ENCODE measurements at regions of chr9 and their contacts with region 1.

Region 1: DNA sequence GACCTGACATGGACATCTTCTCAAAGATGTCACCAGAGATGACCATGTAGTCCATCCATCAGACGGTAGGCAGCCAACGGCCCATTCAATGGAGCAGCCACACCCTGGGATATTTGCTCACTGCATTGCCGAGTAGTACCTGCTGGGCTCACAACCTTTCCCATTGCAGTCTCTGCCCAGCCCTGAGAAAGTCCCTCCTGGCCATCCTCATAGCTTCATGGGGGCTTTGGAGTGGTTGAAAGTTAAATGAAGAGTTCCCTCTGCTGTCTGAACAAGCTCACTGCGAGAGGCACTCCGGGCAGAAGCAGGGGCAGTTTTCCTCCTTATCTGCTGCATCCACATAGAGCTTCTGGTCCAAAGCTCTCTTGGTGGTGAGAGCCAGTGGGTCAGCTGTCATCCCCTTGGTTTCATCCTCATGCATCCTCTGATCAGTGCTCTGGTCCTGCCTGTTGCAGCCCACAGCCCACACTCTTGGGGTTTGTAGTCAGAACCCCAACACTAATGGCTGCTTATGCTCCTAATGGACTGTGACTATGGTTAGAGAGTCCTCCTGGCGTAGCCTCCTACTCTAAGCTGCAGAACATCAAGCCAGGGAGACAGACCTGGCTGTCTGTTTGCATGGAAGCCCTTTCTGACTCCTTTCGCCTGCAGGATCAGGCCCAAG is 23.4 kb downstream of the TNFSF8 start:
- DNase-seq: no peak
- H3K4me3 ChIP-seq: no peak overlapping the region
- H3K27ac ChIP-seq: peak overlapping the region; percentile 18
- H3K4me1 ChIP-seq: peaks cover 6% of the 10 kb centered on the region
- H3K27me3 ChIP-seq: no peaks in the 10 kb centered on the region
- CTCF ChIP-seq: peak; percentile 37

Region 2: GRCh38 chr9:114681594-114682332 is 225.3 kb before region 1 on chr9 and contains the start of gene TEX48:
- intact Hi-C with region 1: loop called (anchors 2 kb)
- DNase-seq: peak; percentile 82
- H3K4me3 ChIP-seq: no peak within 1 kb of the TSS
- H3K27ac ChIP-seq: no peak within 1 kb of the TSS
- H3K4me1 ChIP-seq: no peaks in the 10 kb centered on the region
- H3K27me3 ChIP-seq: no peaks in the 10 kb centered on the region
- CTCF ChIP-seq: peak; percentile 59
- total RNA-seq, gene TEX48: not detected

Region 3: DNA sequence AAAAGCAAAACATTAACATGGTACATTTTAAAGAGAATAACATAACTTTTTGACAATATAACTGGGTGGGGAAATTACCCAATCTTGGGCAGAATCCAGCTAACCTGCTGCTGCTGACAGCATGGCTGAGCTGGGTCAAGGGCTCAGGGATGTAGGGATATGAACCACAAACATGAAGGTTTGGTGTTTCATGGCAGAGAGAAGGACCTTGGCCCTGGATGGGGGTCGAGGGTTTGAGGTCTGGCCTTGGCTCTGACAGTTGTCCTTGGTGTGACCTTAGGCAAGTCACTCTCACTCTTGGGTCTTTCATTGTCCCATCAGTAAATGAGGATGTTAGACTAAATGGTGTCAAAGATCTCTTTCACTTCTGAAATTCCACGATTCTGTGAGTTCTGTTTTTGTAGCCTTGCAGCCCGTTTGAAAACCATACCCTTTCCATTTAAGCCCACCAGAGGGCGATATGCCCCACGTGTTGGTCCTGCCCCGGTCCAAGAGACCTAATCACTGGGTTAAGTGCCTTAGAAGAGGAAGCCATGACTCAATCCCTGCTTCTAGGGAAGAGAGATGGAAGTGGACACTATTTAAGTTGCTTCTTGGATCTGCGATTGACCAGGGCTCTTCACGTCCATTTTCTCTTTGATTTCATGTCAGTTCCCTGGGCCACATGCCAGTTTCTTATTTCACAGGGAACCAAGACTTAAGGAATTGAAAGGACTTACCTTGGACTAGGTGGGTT is 168.3 kb before region 1 on chr9:
- intact Hi-C with region 1: loop called (anchors 2 kb)
- DNase-seq: peak; percentile 81
- H3K4me3 ChIP-seq: no peak overlapping the region
- H3K27ac ChIP-seq: no peak overlapping the region
- H3K4me1 ChIP-seq: no peaks in the 10 kb centered on the region
- H3K27me3 ChIP-seq: no peaks in the 10 kb centered on the region
- CTCF ChIP-seq: peak; percentile 86

Region 4: DNA sequence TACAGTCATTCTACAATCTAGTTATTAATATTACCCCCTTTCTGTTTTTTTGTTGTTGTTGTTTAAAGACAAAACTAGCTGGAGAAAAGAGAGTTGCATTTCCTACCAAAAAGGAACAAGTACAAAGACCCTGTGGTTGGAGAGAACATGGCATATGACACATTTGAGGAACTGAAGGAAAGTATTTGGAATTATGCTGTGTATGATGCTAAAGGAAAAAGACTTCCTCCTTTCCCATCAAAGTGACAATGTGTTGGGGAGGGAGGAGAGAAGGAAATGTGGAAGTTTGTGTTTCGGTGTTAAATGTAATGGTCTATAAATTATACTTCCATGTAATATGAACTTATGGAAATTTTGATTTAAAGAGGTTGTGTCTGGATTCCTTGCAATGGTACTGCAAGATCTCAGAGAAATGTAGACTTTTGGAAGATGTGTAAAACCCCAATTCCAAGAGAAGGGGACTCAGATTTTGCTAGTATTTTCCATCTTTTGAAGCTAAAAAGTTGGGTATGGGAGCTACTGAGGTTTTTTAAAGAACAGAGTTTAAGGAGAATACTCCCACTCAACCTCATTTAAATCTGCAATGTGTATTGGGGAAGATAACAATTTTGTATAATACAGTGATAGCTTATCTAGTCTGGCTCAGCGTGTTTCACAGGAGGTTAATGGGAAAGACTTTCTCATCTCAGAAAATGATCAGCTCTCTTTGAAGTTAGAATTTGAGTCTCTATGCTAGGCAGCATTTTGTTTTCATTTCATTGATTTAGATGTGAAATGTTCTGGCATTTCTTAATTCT is 38.8 kb after region 1 on chr9:
- intact Hi-C with region 1: no loop called
- DNase-seq: no peak
- H3K4me3 ChIP-seq: no peak overlapping the region
- H3K27ac ChIP-seq: no peak overlapping the region
- H3K4me1 ChIP-seq: no peaks in the 10 kb centered on the region
- H3K27me3 ChIP-seq: no peaks in the 10 kb centered on the region
- CTCF ChIP-seq: no peak

Region 5: GRCh38 chr9:115524453-115525059 is 617.5 kb after region 1 on chr9:
- intact Hi-C with region 1: loop called (anchors 10 kb)
- DNase-seq: peak; percentile 40
- H3K4me3 ChIP-seq: no peak overlapping the region
- H3K27ac ChIP-seq: no peak overlapping the region
- H3K4me1 ChIP-seq: no peaks in the 10 kb centered on the region
- H3K27me3 ChIP-seq: no peaks in the 10 kb centered on the region
- CTCF ChIP-seq: peak; percentile 47